CD4-positive, alpha-beta memory T cell (primary cell): ENCODE measurements at regions of chr1 and their contacts with region 1.

Region 1: GRCh38 chr1:40849801-40850592 is 12.2 kb downstream of the CITED4 start:
- DNase-seq: peak; percentile 67 to 78 (median 73)
- H3K4me3 ChIP-seq: no peak overlapping the region
- H3K4me3 Mint-ChIP-seq: peak overlapping the region in 7 of 8 donors; percentile 17 to 56 (median 45)
- H3K27ac ChIP-seq: no peak overlapping the region
- H3K27ac Mint-ChIP-seq: peak overlapping the region in 5 of 7 donors; percentile 19 to 71 (median 35)
- H3K4me1 ChIP-seq: peaks cover 9% of the 10 kb centered on the region
- H3K4me1 Mint-ChIP-seq: peaks cover 5 to 14% (median 11%) of the 10 kb centered on the region in 4 donors
- H3K27me3 ChIP-seq: no peaks in the 10 kb centered on the region
- H3K27me3 Mint-ChIP-seq: no peaks in the 10 kb centered on the region

Region 2: GRCh38 chr1:40612345-40612831 is 237.6 kb before region 1 on chr1:
- CTCF ChIA-PET with region 1: interaction called, 4 read pairs
- POLR2A ChIA-PET with region 1: no interaction called
- intact Hi-C with region 1: loop called (anchors 1 kb)
- DNase-seq: peak; percentile 62 to 69 (median 65)
- H3K4me3 ChIP-seq: no peak overlapping the region
- H3K4me3 Mint-ChIP-seq: no peak overlapping the region
- H3K27ac ChIP-seq: no peak overlapping the region
- H3K27ac Mint-ChIP-seq: no peak overlapping the region
- H3K4me1 ChIP-seq: no peaks in the 10 kb centered on the region
- H3K4me1 Mint-ChIP-seq: no peaks in the 10 kb centered on the region
- H3K27me3 ChIP-seq: no peaks in the 10 kb centered on the region
- H3K27me3 Mint-ChIP-seq: peaks cover 2% of the 10 kb centered on the region in 2 donors